ENCODE measurements at regions of chr13 and their contacts with region 1.

Region 1: GRCh38 chr13:59677966-59678814 is 485.5 kb downstream of the DIAPH3 start:
- DNase-seq: peak; percentile 43
- H3K4me3 ChIP-seq: no peak overlapping the region
- H3K27ac ChIP-seq: no peak overlapping the region
- H3K27me3 ChIP-seq: no peaks in the 10 kb centered on the region
- CTCF ChIP-seq: peak; percentile 93

Region 2: GRCh38 chr13:59345316-59345715 is 332.9 kb before region 1 on chr13:
- CTCF ChIA-PET with region 1: no interaction called
- POLR2A ChIA-PET with region 1: no interaction called
- DNase-seq: no peak
- H3K4me3 ChIP-seq: no peak overlapping the region
- H3K27ac ChIP-seq: no peak overlapping the region
- H3K27me3 ChIP-seq: peaks cover 2% of the 10 kb centered on the region
- CTCF ChIP-seq: no peak

Region 3: GRCh38 chr13:59398127-59398526 is 280.1 kb before region 1 on chr13:
- CTCF ChIA-PET with region 1: interaction called, 339 read pairs
- POLR2A ChIA-PET with region 1: no interaction called
- DNase-seq: no peak
- H3K4me3 ChIP-seq: no peak overlapping the region
- H3K27ac ChIP-seq: no peak overlapping the region
- H3K27me3 ChIP-seq: no peaks in the 10 kb centered on the region
- CTCF ChIP-seq: no peak

Region 4: DNA sequence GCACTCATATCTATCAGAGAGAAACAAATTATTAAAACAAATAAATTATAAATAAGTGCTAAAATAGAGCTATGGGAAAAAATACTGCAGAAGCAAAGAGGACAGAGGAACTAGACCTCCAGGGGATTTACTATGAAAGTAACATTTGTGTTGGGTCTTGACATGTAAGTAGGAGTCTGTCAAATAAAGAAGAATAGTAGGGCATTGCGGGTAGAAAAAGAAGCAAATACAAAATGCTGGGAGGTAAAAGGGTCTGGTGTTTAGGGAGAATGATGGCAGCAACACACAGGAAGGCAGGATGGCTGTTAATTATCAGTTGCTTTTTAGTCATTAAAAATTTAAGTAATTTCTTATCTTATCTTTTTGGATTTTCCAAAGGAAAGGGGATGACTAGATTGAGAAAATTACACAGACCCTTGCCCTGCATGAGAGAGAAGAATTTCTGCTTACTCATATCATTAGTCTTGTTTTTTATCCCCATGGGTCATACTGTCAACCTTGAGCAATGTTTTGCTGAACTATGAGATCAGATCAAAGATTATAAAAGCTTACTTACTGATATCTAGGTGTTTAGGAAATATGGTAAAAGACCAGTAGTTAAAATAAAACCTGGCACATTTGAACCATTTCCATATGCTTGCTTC is 12.8 kb after region 1 on chr13:
- CTCF ChIA-PET with region 1: interaction called, 66 read pairs
- POLR2A ChIA-PET with region 1: no interaction called
- DNase-seq: no peak
- H3K4me3 ChIP-seq: no peak overlapping the region
- H3K27ac ChIP-seq: no peak overlapping the region
- H3K27me3 ChIP-seq: no peaks in the 10 kb centered on the region
- CTCF ChIP-seq: no peak

Region 5: GRCh38 chr13:60201286-60201685 is 523.1 kb after region 1 on chr13:
- CTCF ChIA-PET with region 1: interaction called, 11 read pairs
- POLR2A ChIA-PET with region 1: no interaction called
- DNase-seq: no peak
- H3K4me3 ChIP-seq: no peak overlapping the region
- H3K27ac ChIP-seq: no peak overlapping the region
- H3K27me3 ChIP-seq: no peaks in the 10 kb centered on the region
- CTCF ChIP-seq: no peak

Region 6: GRCh38 chr13:60335531-60335930 is 657.3 kb after region 1 on chr13:
- CTCF ChIA-PET with region 1: interaction called, 11 read pairs
- POLR2A ChIA-PET with region 1: no interaction called
- DNase-seq: no peak
- H3K4me3 ChIP-seq: no peak overlapping the region
- H3K27ac ChIP-seq: no peak overlapping the region
- H3K27me3 ChIP-seq: no peaks in the 10 kb centered on the region
- CTCF ChIP-seq: peak; percentile 62

Region 7: DNA sequence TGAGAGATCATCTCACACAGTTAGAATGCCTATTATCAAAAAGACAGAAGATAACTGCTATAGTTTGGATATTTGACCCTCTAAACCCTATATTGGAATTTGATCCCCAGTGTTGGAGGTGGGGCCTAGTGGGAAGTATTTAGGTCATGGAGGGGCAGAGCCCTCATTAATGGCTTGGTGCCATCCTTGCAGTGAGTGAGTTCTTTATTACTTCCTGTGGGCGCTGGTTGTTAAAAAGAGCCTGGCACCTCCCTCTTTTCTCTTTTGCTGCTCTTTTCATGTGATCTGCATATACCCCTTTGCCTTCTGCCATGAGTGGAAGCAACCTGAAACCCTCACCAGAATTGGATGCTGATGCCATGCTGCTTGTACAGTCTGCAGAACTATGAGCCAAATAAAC is 785.6 kb after region 1 on chr13:
- CTCF ChIA-PET with region 1: no interaction called
- POLR2A ChIA-PET with region 1: no interaction called
- DNase-seq: no peak
- H3K4me3 ChIP-seq: no peak overlapping the region
- H3K27ac ChIP-seq: no peak overlapping the region
- H3K27me3 ChIP-seq: no peaks in the 10 kb centered on the region
- CTCF ChIP-seq: no peak

Measured in AG04450 (cell line).